ENCODE measurements at regions of chr9 and their contacts with region 1.

Region 1: DNA sequence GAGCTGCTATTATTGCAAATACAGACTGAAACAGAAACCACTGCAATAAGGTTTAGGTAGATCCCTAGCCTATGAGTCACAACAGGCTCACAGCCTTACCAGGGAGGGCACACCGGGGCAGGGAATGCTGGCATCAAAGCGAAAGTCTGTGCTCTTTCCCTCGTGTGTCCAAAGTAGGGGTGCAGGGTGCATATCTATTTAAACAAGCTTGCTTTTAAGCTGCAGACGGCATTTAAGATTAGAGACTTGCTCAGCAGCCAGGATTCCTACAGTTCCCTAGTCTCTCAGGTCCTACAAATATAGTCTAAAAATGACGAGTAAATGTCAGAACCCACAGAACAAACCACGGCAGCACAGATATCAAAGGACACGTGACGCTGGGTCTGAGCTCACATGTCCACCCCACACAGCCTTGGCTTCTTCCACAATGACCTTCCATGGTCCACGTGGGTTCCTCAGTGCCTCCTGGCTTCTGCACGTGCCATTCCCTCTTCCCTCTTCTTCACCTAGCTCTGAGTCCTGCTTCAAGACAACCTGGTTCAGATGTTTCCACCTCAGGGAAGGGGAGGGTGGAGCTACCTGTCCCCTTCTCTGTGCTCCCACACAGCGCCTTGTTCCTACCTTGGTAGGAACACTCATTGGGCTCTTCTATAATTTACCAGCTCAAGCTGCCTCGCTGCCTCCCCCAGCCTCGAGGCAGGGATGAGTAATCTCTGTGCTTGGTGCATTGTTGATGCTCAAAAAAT is 193.2 kb downstream of the MAPKAP1 start:
- DNase-seq: no peak
- ATAC-seq: peak; percentile 76

Region 2: GRCh38 chr9:125261501-125262293 is 252.1 kb before region 1 on chr9 and contains the start of gene GAPVD1:
- intact Hi-C with region 1: no loop called
- DNase-seq: peak; percentile 94
- ATAC-seq: peak; percentile 99
- total RNA-seq, gene GAPVD1: 31.5 TPM

Region 3: DNA sequence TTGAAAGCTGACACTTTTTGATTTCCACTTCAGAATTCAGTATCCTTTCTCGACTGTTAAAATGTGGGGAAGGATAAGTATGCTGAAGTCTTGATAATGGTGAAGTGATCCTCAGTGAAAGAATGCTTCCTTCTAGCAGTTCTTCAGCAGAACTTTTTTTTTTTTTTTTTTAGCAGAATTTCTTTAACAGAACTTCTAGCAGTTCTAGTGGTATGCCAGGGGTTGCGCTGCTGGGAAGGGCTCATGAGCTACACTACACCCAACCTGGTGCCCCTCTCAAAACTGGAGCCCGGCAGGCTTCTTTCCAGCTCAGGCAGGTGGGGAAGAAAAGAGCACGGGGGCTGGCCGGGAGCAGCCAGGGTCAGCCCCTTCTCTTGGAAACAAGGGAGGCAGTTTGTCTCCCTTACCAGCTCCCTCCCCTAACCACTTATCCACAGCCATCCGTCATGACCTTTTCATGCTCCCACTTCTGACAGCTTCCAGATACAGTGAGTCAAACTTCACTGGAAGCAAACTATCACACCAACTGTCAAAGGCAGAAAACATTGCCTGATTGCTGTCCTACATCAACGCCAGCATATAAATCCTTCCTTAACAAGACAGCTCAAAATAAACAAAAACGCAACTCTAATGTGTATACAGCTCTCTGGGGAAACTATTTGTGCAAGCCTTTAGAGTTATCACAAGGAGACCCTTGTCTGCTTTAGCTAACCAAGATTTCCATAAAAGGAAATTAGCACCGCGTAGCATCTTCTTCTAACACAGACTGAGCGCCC is 40.7 kb before region 1 on chr9:
- intact Hi-C with region 1: loop called (anchors 5 kb)
- DNase-seq: no peak
- ATAC-seq: peak; percentile 85

Region 4: DNA sequence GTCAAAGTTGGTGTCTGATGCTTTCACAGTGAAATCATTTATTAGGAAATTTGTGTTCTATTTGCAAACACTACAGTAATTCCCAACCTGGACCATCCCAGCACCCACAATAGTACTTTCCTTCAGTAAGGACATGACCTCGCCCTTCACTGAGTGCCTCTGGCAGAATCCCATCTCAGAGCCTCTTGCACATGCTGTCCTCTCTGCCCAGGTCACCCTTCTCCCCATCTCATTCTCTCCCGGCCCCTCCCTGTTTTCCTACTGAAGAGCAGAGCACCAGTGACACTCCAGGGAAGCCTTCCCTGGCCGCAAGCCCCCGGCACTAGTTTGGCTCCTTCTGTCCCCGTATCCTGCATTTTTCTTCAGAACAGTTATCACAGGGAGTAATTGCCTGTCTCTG is 27.3 kb before region 1 on chr9:
- intact Hi-C with region 1: loop called (anchors 1 kb)
- DNase-seq: no peak
- ATAC-seq: peak; percentile 91

Region 5: DNA sequence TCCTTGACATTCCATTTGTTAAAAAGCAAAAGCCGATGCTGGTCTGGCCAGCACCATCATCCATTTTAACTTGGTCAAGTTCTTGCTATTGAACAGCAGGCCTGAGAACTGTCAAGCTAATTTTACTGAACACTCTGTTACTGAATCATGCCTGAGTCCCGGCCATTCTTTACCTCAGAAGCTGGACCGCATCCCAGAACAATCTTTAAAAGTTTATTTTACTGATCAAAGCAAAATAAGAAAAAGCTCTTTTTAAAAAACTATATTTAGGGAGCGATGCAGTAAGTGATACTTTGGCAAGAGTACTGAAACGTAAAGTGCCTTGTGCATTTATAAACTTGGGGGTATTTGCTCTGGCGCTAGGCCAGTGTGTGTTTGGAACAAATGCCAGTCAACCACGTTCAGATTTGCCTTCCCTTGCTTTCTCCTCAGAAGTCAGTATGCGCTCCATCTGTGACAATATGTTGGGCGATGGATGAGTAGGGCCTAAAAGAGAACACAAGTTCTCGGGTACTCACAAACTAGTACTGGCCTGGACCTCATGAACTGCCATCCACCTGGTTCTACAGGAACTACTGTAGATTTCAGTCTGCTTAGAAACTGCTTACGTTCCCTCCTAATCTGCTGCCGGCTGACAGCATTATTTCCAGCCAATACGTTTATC is 31.3 kb after region 1 on chr9:
- intact Hi-C with region 1: loop called (anchors 5 kb)
- DNase-seq: no peak
- ATAC-seq: peak; percentile 43

Region 6: DNA sequence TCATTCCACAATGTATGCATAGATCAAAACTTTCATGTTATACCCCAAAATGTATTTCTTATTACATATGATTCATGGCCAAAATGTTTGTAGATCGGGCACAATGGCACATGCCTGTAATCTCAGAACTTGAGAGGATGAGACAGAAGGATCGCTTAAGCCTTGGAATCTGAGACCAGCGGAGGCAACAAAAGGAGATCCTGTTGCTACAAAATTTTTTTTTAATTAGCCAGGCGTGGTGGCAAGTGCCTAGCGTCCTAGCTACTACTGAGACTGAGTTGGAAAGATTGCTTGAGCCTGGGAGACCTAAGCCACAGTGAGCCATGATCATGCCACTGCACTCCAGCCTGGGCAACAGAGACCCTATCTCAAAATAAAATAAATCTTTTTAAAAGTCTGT is 103.2 kb after region 1 on chr9:
- intact Hi-C with region 1: no loop called
- DNase-seq: no peak
- ATAC-seq: no peak

Measured in Right ventricle myocardium inferior (tissue), 1 donor.